Uterus (tissue), 4 donors: ENCODE measurements at regions of chr11 and their contacts with region 1.

Region 1: GRCh38 chr11:6443269-6444003 is 2.6 kb upstream of the HPX start:
- DNase-seq: peak; percentile 52 to 54
- H3K4me3 ChIP-seq: no peak overlapping the region
- H3K27ac ChIP-seq: no peak overlapping the region
- H3K4me1 ChIP-seq: no peaks in the 10 kb centered on the region
- H3K27me3 ChIP-seq: no peaks in the 10 kb centered on the region
- CTCF ChIP-seq: peak; percentile 66 to 84 (median 80)
- POLR2A ChIP-seq: no peak

Region 2: DNA sequence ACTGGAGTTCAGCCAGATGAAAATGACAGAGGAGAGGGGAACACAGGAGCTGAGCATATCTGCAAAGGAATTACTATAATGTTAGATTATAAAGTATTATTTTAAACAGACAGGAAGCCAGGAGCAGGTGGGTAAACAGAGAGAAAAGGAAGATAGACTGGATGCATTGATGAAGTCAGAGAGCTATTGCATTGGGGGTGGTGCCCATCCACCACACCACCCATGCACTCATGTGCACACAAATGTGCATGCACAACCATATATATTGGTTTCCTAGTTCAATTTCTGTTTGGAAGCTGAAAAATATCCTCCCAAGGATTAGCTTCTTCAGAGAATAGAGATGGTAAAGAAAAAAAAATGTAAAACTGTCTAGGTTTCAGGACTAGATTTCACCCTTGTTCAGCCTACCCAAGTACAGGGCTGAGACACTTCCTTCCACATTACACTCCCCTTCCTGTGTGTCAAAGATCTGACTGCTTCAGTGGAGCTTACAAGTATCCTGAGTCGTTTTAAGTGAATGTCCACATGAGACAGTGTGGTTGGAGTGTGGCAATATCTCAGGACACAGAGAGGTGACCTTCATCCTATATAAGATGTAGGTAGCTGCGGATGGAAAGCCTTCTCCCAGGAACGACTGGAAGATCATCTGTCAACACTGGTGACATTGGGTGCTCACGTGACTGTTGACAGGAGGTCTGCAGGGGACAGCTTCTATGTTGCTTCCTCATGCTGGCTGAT is 65.4 kb before region 1 on chr11:
- intact Hi-C with region 1: loop called (anchors 5 kb)
- DNase-seq: no peak
- H3K4me3 ChIP-seq: no peak overlapping the region
- H3K27ac ChIP-seq: no peak overlapping the region
- H3K4me1 ChIP-seq: no peaks in the 10 kb centered on the region
- H3K27me3 ChIP-seq: no peaks in the 10 kb centered on the region
- CTCF ChIP-seq: no peak
- POLR2A ChIP-seq: no peak

Region 3: DNA sequence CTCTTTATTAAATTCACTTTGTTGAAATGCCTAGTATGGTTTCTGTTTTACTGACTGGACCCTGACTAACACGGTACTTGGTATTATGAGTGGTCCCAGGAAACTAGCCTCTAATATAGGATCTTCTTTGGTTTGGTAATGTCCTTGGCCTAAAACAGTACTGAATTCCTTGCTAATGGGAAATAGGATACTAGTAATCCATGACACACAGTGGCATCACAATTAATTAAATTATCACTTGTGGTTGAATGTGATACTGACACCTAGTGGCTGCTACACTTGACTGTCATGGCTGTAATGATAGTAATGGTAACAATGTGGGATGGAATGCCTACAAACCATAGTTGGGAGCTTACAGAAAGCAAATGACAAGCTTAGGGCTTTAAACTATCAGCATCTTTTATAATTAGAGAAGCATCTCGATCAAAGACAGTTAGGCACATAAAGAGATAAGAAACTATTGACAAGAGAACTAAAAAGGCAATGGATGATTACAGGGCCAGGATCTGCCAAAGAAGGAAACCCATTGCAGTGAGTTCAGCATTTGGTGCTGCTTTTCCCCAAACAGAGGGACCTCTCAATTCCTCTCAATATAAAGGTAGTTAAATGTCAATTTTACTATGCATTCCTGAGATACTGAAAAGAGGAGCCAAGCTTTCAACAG is 62.3 kb after region 1 on chr11:
- intact Hi-C with region 1: loop called (anchors 10 kb)
- DNase-seq: no peak
- H3K4me3 ChIP-seq: no peak overlapping the region
- H3K27ac ChIP-seq: no peak overlapping the region
- H3K4me1 ChIP-seq: no peaks in the 10 kb centered on the region
- H3K27me3 ChIP-seq: no peaks in the 10 kb centered on the region
- CTCF ChIP-seq: peak; percentile 53 to 70 (median 64)
- POLR2A ChIP-seq: no peak